ENCODE measurements at regions of chr14 and their contacts with region 1.

Region 1: GRCh38 chr14:73785873-73786695 is 65.5 kb upstream of the PTGR2 start:
- DNase-seq: peak; percentile 63
- H3K4me3 Mint-ChIP-seq: peak overlapping the region; percentile 92
- H3K27ac Mint-ChIP-seq: peak overlapping the region; percentile 96
- H3K4me1 Mint-ChIP-seq: peaks cover 64% of the 10 kb centered on the region
- H3K27me3 Mint-ChIP-seq: no peaks in the 10 kb centered on the region

Region 2: GRCh38 chr14:73696466-73697400 is 89.4 kb before region 1 on chr14:
- intact Hi-C with region 1: loop called (anchors 1 kb)
- DNase-seq: no peak
- H3K4me3 Mint-ChIP-seq: peak overlapping the region; percentile 64
- H3K27ac Mint-ChIP-seq: peak overlapping the region; percentile 78
- H3K4me1 Mint-ChIP-seq: peaks cover 41% of the 10 kb centered on the region
- H3K27me3 Mint-ChIP-seq: no peaks in the 10 kb centered on the region

Region 3: GRCh38 chr14:73741386-73741875 is 44.7 kb before region 1 on chr14:
- intact Hi-C with region 1: loop called (anchors 1 kb)
- DNase-seq: peak; percentile 61
- H3K4me3 Mint-ChIP-seq: peak overlapping the region; percentile 83
- H3K27ac Mint-ChIP-seq: peak overlapping the region; percentile 86
- H3K4me1 Mint-ChIP-seq: peaks cover 62% of the 10 kb centered on the region
- H3K27me3 Mint-ChIP-seq: no peaks in the 10 kb centered on the region

Region 4: DNA sequence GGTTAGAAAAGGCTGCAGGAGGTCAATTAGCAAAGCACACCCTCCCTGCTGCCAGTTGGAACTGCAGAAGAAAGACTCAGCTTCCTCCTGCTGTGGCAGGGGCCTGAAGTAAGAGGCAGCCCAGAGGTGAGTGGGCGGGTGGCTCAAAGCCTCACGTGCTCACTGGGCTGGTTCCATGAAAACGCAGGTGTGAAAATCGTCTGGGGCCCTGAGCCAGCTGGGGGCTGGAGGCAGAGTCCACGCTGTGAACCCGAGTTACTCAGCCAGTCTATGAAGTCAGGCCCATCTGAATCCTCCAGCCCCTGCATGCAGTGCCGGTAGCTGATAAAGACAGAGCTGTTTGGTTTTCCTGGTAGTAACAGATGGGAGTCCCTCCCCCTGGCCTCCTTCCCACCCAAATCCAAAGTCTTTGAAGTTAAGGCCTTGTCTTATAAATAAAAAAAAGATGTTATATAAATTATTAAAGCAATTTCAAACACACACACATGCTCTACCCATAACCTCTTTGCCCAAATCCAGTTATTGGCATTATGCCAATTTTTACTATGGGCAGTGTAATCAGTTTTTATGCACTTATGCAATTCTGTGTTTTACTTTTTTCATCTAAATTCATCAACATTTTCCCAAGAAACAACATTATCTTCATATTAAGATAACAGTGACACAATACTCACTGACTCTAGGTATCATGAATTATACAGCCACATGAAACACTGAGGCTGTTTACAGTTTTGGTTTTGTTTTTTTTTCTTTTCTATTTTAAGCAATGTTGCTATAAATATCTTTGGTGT is 14.0 kb before region 1 on chr14:
- intact Hi-C with region 1: loop called (anchors 1 kb)
- DNase-seq: peak; percentile 56
- H3K4me3 Mint-ChIP-seq: peak overlapping the region; percentile 48
- H3K27ac Mint-ChIP-seq: peak overlapping the region; percentile 67
- H3K4me1 Mint-ChIP-seq: peaks cover 60% of the 10 kb centered on the region
- H3K27me3 Mint-ChIP-seq: no peaks in the 10 kb centered on the region

Region 5: GRCh38 chr14:73851644-73852382 is 65.7 kb after region 1 on chr14 and contains the start of gene PTGR2:
- intact Hi-C with region 1: loop called (anchors 2 kb)
- DNase-seq: peak; percentile 82
- H3K4me3 Mint-ChIP-seq: peak within 1 kb of the TSS; percentile 91
- H3K27ac Mint-ChIP-seq: peak within 1 kb of the TSS; percentile 92
- H3K4me1 Mint-ChIP-seq: peaks cover 20% of the 10 kb centered on the region
- H3K27me3 Mint-ChIP-seq: peaks cover 3% of the 10 kb centered on the region
- total RNA-seq, gene PTGR2: 1.2 and 2.0 TPM in 2 replicates

Region 6: GRCh38 chr14:74084277-74085046 is 298.4 kb after region 1 on chr14 and contains the starts of genes ALDH6A1 and LIN52:
- intact Hi-C with region 1: loop called (anchors 10 kb)
- DNase-seq: peak; percentile 100
- H3K4me3 Mint-ChIP-seq: peak within 1 kb of the TSS; percentile 94
- H3K27ac Mint-ChIP-seq: peak within 1 kb of the TSS; percentile 94
- H3K4me1 Mint-ChIP-seq: peaks cover 45% of the 10 kb centered on the region
- H3K27me3 Mint-ChIP-seq: peaks cover 4% of the 10 kb centered on the region
- total RNA-seq, gene ALDH6A1: 10.8 and 11.0 TPM in 2 replicates
- total RNA-seq, gene LIN52: 15.9 and 17.2 TPM in 2 replicates

Measured in activated T-helper 1 cell treated with anti-CD3 and anti-CD28 coated beads, Interleukin-12 subunit alpha, Interleukin-12 subunit beta, Interleukin-2, Interleukin-4 antibody, amounts not matched to agents 30 ng/mL and 10 ng/mL and 1 ng/mL, durations not matched to agents 14 hours and 24 hours and 36 hours (primary cell).